Activated naive CD4-positive, alpha-beta T cell treated with anti-CD3 and anti-CD28 coated beads for 36 hours (primary cell): ENCODE measurements at regions of chr9 and their contacts with region 1.

Region 1: GRCh38 chr9:69877854-69878514 is 57.4 kb downstream of the CFAP95 start:
- DNase-seq: no peak
- H3K4me3 Mint-ChIP-seq: no peak overlapping the region
- H3K27ac Mint-ChIP-seq: no peak overlapping the region
- H3K4me1 Mint-ChIP-seq: no peaks in the 10 kb centered on the region
- H3K27me3 Mint-ChIP-seq: peaks cover 4% of the 10 kb centered on the region

Region 2: GRCh38 chr9:69549310-69550202 is 328.4 kb before region 1 on chr9:
- CTCF ChIA-PET with region 1: no interaction called
- intact Hi-C with region 1: loop called (anchors 1 kb)
- DNase-seq: peak; percentile 32
- H3K4me3 Mint-ChIP-seq: no peak overlapping the region
- H3K27ac Mint-ChIP-seq: no peak overlapping the region
- H3K4me1 Mint-ChIP-seq: no peaks in the 10 kb centered on the region
- H3K27me3 Mint-ChIP-seq: peaks cover 18% of the 10 kb centered on the region

Region 3: GRCh38 chr9:69672596-69673310 is 205.2 kb before region 1 on chr9:
- CTCF ChIA-PET with region 1: interaction called, 3 read pairs
- intact Hi-C with region 1: loop called (anchors 1 kb)
- DNase-seq: peak; percentile 81
- H3K4me3 Mint-ChIP-seq: peak overlapping the region; percentile 72
- H3K27ac Mint-ChIP-seq: no peak overlapping the region
- H3K4me1 Mint-ChIP-seq: peaks cover 9% of the 10 kb centered on the region
- H3K27me3 Mint-ChIP-seq: peaks cover 12% of the 10 kb centered on the region

Region 4: GRCh38 chr9:69750085-69750484 is 127.9 kb before region 1 on chr9:
- CTCF ChIA-PET with region 1: no interaction called
- intact Hi-C with region 1: no loop called
- DNase-seq: no peak
- H3K4me3 Mint-ChIP-seq: no peak overlapping the region
- H3K27ac Mint-ChIP-seq: no peak overlapping the region
- H3K4me1 Mint-ChIP-seq: peaks cover 46% of the 10 kb centered on the region
- H3K27me3 Mint-ChIP-seq: no peaks in the 10 kb centered on the region

Region 5: GRCh38 chr9:69809304-69809863 is 68.6 kb before region 1 on chr9:
- CTCF ChIA-PET with region 1: no interaction called
- intact Hi-C with region 1: loop called (anchors 1 kb)
- DNase-seq: peak; percentile 52
- H3K4me3 Mint-ChIP-seq: no peak overlapping the region
- H3K27ac Mint-ChIP-seq: no peak overlapping the region
- H3K4me1 Mint-ChIP-seq: no peaks in the 10 kb centered on the region
- H3K27me3 Mint-ChIP-seq: peaks cover under 1% of the 10 kb centered on the region

Region 6: GRCh38 chr9:69919461-69920061 is 41.6 kb after region 1 on chr9:
- CTCF ChIA-PET with region 1: interaction called, 4 read pairs
- intact Hi-C with region 1: loop called (anchors 2 kb)
- DNase-seq: no peak
- H3K4me3 Mint-ChIP-seq: no peak overlapping the region
- H3K27ac Mint-ChIP-seq: no peak overlapping the region
- H3K4me1 Mint-ChIP-seq: no peaks in the 10 kb centered on the region
- H3K27me3 Mint-ChIP-seq: peaks cover 21% of the 10 kb centered on the region